B cell (primary cell): ENCODE measurements at regions of chr6 and their contacts with region 1.

Region 1: DNA sequence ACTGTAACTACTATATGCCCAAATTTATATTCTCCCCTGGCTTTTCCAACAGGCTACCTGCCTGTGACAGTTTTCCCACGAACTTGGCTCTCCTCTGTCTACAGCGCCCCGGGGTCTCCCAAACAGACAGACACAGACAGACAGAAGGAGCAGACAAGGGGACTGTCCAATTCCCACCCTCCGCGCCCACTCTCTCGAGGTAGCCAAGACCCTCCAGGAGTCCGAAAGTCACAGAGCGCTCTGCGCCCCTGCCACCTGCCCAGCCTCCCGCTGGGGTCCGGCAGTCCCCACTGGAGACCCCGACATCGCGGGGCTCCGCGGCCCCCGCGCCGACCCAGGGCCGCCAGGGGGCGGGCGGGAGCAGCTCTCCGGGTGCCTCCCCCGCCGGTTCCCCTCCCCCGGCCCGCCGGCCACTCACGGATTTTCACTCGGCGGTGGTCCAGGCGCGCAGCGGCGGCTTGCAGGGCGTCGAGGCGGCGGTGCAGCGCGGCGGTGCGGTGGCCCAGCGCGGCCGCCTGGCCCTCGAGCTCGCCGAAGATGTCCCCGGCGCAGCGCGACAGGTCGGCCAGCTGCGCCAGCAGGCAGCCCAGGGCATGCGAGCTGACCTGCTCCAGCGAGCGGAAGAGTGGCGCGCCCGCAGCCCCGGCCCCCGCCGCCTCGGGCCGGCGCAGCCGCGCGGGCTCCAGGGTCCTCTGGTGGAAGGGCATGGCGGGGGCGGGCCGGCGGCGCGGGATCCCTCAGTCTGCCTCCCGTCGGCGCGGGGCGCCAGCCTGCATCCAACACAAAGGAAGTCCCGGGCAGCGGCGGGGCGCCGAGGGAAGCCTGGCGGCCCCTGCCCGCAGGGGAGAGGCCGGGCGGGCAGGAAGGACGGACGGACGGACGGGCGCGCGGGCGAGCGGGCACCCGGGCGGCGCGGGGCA is 81.3 kb upstream of the CCDC28A start:
- DNase-seq: peak; percentile 76
- ATAC-seq: peak; percentile 76
- H3K4me3 ChIP-seq: peak overlapping the region in 4 of 5 experiments; percentile 7 to 76 (median 64)
- H3K4me3 Mint-ChIP-seq: peak overlapping the region; percentile 86
- H3K27ac ChIP-seq: no peak overlapping the region
- H3K27ac Mint-ChIP-seq: no peak overlapping the region
- H3K4me1 ChIP-seq: peaks cover 9 to 11% of the 10 kb centered on the region in 2 donors
- H3K4me1 Mint-ChIP-seq: peaks cover 10% of the 10 kb centered on the region
- H3K27me3 ChIP-seq: peaks cover 0 to 28% (median 12%) of the 10 kb centered on the region in 4 experiments
- H3K27me3 Mint-ChIP-seq: peaks cover 31% of the 10 kb centered on the region
- CTCF ChIP-seq: peak; percentile 84

Region 2: DNA sequence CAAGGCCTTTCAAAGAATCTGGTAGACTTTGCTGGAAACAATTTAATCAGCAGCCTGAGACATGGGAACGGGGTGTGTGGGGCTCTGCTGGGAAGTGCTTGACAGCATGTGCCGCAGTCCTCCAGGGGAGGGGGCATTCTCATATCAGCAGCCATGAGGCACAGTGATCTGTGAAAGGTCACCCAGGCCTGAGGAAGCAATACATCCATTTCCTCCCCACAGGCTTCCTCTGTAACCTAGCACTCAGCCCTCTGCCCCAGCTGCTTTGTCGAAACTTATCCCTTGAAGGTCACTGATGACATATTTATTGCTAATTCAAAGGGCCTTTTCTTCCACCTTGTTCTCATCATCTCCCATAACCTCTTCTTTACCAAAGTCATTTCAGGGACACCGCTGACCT is 722.0 kb before region 1 on chr6:
- CTCF ChIA-PET with region 1: no interaction called
- POLR2A ChIA-PET with region 1: no interaction called
- intact Hi-C with region 1: no loop called
- DNase-seq: no peak
- ATAC-seq: peak; percentile 43
- H3K4me3 ChIP-seq: no peak overlapping the region
- H3K4me3 Mint-ChIP-seq: no peak overlapping the region
- H3K27ac ChIP-seq: no peak overlapping the region
- H3K27ac Mint-ChIP-seq: no peak overlapping the region
- H3K4me1 ChIP-seq: peaks cover 8 to 13% of the 10 kb centered on the region in 2 donors
- H3K4me1 Mint-ChIP-seq: peaks cover 9% of the 10 kb centered on the region
- H3K27me3 ChIP-seq: no peaks in the 10 kb centered on the region
- H3K27me3 Mint-ChIP-seq: no peaks in the 10 kb centered on the region
- CTCF ChIP-seq: no peak

Region 3: GRCh38 chr6:138647006-138647405 is 45.3 kb before region 1 on chr6:
- CTCF ChIA-PET with region 1: no interaction called
- POLR2A ChIA-PET with region 1: no interaction called
- intact Hi-C with region 1: no loop called
- DNase-seq: no peak
- ATAC-seq: no peak
- H3K4me3 ChIP-seq: no peak overlapping the region
- H3K4me3 Mint-ChIP-seq: no peak overlapping the region
- H3K27ac ChIP-seq: no peak overlapping the region
- H3K27ac Mint-ChIP-seq: no peak overlapping the region
- H3K4me1 ChIP-seq: no peaks in the 10 kb centered on the region
- H3K4me1 Mint-ChIP-seq: no peaks in the 10 kb centered on the region
- H3K27me3 ChIP-seq: no peaks in the 10 kb centered on the region
- H3K27me3 Mint-ChIP-seq: peaks cover 3% of the 10 kb centered on the region
- CTCF ChIP-seq: no peak

Region 4: DNA sequence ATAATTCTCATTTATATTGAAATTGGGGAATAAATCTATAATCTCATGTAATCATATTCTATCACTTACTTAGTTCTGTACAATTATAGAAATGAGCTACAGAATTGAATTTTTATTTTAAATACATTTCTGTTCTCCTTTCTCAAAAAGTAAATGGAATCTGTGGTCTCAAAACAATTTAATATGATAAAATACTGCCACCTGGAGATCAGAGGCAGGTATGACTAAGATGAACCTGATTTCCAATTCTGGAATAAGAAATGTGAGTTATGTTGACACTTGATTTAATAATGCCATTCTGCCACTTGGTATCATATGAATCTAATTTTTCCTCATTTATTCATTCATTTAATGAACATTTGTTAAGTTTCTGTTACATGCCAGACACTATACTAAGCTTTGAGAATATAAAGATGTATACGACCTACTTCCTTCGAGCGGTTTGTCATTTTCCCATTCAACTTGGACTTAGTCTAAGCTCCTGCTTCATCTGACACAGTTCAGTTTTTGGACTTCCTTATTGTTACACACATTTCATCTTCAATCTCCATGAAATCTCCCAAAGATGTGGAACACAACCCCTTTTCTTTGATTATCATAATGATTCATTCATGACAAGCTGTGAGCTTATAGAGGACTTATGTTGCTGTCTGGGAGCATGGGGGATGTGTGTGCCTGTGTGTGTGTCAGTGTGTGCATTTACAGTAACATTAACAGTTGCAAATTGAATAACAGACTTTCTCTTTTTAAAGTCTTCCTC is 73.8 kb after region 1 on chr6:
- CTCF ChIA-PET with region 1: interaction called, 41 read pairs
- POLR2A ChIA-PET with region 1: no interaction called
- intact Hi-C with region 1: loop called (anchors 1 kb)
- DNase-seq: peak; percentile 57
- ATAC-seq: peak; percentile 47
- H3K4me3 ChIP-seq: no peak overlapping the region
- H3K4me3 Mint-ChIP-seq: no peak overlapping the region
- H3K27ac ChIP-seq: no peak overlapping the region
- H3K27ac Mint-ChIP-seq: no peak overlapping the region
- H3K4me1 ChIP-seq: peaks cover 9 to 13% of the 10 kb centered on the region in 2 donors
- H3K4me1 Mint-ChIP-seq: peaks cover 5% of the 10 kb centered on the region
- H3K27me3 ChIP-seq: no peaks in the 10 kb centered on the region
- H3K27me3 Mint-ChIP-seq: no peaks in the 10 kb centered on the region
- CTCF ChIP-seq: peak; percentile 84